SK-N-SH (cell line): ENCODE measurements at regions of chr11 and their contacts with region 1.

Region 1: GRCh38 chr11:11036848-11037732 is 179.2 kb upstream of the ZBED5 start:
- DNase-seq: peak; percentile 55
- H3K4me3 ChIP-seq: no peak overlapping the region
- H3K27ac ChIP-seq: no peak overlapping the region
- H3K4me1 ChIP-seq: peaks cover 0 to 18% of the 10 kb centered on the region in 2 experiments; a peak in 1 of 4 replicates
- H3K27me3 ChIP-seq: no peaks in the 10 kb centered on the region; the same call in 1 of the 2 replicates
- CTCF ChIP-seq: peak; percentile 58
- EP300 ChIP-seq: no peak
- RAD21 ChIP-seq: peak; percentile 79

Region 2: GRCh38 chr11:11047851-11048610 is 10.9 kb after region 1 on chr11:
- CTCF ChIA-PET with region 1: interaction called, 11 read pairs
- POLR2A ChIA-PET with region 1: no interaction called
- DNase-seq: no peak
- H3K4me3 ChIP-seq: no peak overlapping the region
- H3K27ac ChIP-seq: no peak overlapping the region
- H3K4me1 ChIP-seq: no peaks in the 10 kb centered on the region; a peak in 1 of 4 replicates
- H3K27me3 ChIP-seq: no peaks in the 10 kb centered on the region
- CTCF ChIP-seq: no peak
- EP300 ChIP-seq: no peak
- RAD21 ChIP-seq: no peak

Region 3: GRCh38 chr11:11157185-11157584 is 120.1 kb after region 1 on chr11:
- CTCF ChIA-PET with region 1: interaction called, 11 read pairs
- POLR2A ChIA-PET with region 1: no interaction called
- DNase-seq: peak; percentile 59
- H3K4me3 ChIP-seq: no peak overlapping the region; a peak in 1 of 4 replicates
- H3K27ac ChIP-seq: no peak overlapping the region
- H3K4me1 ChIP-seq: no peaks in the 10 kb centered on the region; a peak in 1 of 4 replicates
- H3K27me3 ChIP-seq: no peaks in the 10 kb centered on the region
- CTCF ChIP-seq: peak; percentile 52
- EP300 ChIP-seq: no peak
- RAD21 ChIP-seq: peak; percentile 55

Region 4: DNA sequence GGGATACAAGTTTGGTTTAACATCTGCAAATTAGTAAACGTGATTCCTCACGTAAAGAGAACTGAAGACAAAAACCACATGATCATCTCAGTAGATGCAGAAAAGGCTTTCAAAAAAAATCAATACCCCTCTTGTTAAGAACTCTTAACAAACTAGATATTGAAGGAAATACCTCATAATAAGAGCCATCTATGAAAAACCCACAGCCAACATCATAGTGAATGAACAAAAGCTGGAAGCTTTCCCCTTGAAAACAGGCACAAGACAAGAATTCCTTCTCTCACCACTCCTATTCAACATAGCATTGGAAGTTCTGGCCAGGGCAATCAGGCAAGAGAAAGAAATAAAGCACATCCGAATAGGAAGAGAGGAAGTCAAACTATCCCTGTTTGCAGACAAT is 155.5 kb after region 1 on chr11:
- CTCF ChIA-PET with region 1: no interaction called
- POLR2A ChIA-PET with region 1: no interaction called
- DNase-seq: no peak
- H3K4me3 ChIP-seq: no peak overlapping the region
- H3K27ac ChIP-seq: no peak overlapping the region
- H3K4me1 ChIP-seq: no peaks in the 10 kb centered on the region
- H3K27me3 ChIP-seq: no peaks in the 10 kb centered on the region
- CTCF ChIP-seq: no peak
- EP300 ChIP-seq: no peak
- RAD21 ChIP-seq: no peak

Region 5: GRCh38 chr11:11793073-11793472 is 756.0 kb after region 1 on chr11:
- CTCF ChIA-PET with region 1: interaction called, 95 read pairs
- POLR2A ChIA-PET with region 1: no interaction called
- DNase-seq: no peak
- H3K4me3 ChIP-seq: no peak overlapping the region
- H3K27ac ChIP-seq: no peak overlapping the region
- H3K4me1 ChIP-seq: no peaks in the 10 kb centered on the region
- H3K27me3 ChIP-seq: no peaks in the 10 kb centered on the region; the same call in 1 of the 2 replicates
- CTCF ChIP-seq: no peak
- EP300 ChIP-seq: no peak
- RAD21 ChIP-seq: no peak